SK-N-SH (cell line): ENCODE measurements at regions of chr16 and their contacts with region 1.

Region 1: DNA sequence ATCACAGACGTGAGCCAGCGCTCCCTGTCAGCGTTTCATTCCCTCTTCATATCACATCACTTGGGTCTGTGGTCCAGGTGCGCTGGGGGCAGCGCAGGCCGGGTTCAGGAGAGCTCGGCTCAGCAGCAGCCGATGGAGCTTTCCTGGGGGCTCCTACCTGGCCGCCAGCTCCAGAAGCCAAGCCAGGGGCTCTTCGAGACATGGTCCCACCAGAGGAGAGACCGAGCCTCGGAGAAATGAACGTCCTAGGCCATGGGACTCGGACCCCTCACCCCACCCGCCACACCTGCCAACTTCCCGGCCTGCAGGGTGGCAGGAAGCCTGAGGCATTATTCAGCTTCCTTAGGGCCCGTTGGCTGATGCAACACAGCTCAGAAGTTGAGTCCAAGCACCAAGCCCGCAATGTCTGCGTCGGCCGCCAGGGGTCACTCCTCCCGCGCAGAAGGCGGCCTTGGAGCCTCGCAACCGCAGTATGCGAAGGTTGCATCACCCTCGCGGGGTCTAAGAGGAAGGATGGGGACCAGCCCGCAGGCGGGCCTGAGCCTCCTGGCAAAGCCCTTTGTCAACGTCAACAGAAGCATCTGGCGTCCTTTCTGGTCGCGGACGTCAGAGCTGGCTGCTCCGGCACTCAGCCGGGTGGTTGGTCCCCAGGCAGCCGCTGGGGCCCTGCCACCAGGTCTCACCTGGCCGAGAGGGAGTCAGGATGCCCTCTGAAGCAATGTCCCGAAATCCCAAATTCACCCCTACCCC is 13.2 kb upstream of the KLHDC4 start:
- DNase-seq: peak; percentile 88
- H3K4me3 ChIP-seq: no peak overlapping the region
- H3K27ac ChIP-seq: peak overlapping the region; percentile 64 to 70
- H3K4me1 ChIP-seq: peaks cover 16 to 22% of the 10 kb centered on the region in 2 experiments; a peak in 2 of 4 replicates
- H3K27me3 ChIP-seq: no peaks in the 10 kb centered on the region
- CTCF ChIP-seq: peak; percentile 82
- EP300 ChIP-seq: peak in 1 of 2 experiments; percentile 60; a peak in 1 of 4 replicates
- RAD21 ChIP-seq: peak; percentile 97

Region 2: DNA sequence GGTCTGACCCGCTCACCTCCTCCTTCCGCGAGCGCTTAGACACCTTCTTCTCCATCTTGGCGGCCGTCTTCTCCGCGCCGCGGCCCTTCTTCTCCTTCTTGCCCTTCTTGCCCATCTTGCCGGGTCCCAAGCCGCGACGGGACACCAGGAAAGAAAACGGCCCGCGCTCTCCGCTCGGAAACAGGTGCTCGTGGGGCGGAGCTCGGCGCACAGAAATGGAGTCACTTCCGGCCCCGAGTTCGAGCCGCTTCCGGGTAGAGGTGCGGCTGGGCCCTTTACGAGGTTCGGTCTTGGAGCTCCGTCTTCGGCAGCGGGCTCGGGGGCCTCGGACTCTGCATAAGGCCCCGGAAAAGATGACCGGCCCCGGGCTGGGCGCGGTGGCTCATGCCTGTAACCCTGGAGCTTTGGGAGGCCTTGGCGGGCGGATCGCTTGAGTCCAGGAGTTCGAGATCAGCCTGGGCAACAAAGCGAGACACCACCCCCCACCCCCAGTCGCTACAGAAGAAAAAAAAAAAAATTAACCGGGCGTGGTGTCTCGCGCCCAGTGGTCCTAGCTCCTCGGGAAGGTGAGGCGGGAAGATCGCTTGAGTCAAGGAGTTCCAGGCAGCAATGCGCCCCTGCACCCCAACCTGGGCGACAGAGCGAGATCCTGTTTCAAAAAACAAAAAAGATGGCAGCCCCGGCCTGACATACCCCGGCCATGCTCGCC is 13.1 kb before region 1 on chr16 and contains the start of gene KLHDC4:
- CTCF ChIA-PET with region 1: interaction called, 35 read pairs
- POLR2A ChIA-PET with region 1: no interaction called
- DNase-seq: peak; percentile 94
- H3K4me3 ChIP-seq: peak within 1 kb of the TSS; percentile 79 to 97
- H3K27ac ChIP-seq: peak within 1 kb of the TSS; percentile 66 to 78
- H3K4me1 ChIP-seq: peaks cover 4 to 5% of the 10 kb centered on the region in 2 experiments; a peak in 1 of 4 replicates
- H3K27me3 ChIP-seq: no peaks in the 10 kb centered on the region
- CTCF ChIP-seq: no peak
- EP300 ChIP-seq: no peak
- RAD21 ChIP-seq: no peak
- polyA plus RNA-seq, gene KLHDC4: 39.0 and 51.2 TPM in 2 replicates

Region 3: GRCh38 chr16:87806603-87807546 is 27.9 kb after region 1 on chr16:
- CTCF ChIA-PET with region 1: interaction called, 113 read pairs
- POLR2A ChIA-PET with region 1: interaction called, 11 read pairs
- DNase-seq: peak; percentile 86
- H3K4me3 ChIP-seq: peak overlapping the region; percentile 10 to 21; a peak in 2 of 4 replicates
- H3K27ac ChIP-seq: peak overlapping the region; percentile 49 to 94
- H3K4me1 ChIP-seq: peaks cover 12 to 18% of the 10 kb centered on the region in 2 experiments; a peak in 2 of 4 replicates
- H3K27me3 ChIP-seq: no peaks in the 10 kb centered on the region
- CTCF ChIP-seq: no peak
- EP300 ChIP-seq: peak in 1 of 2 experiments; percentile 60; a peak in 1 of 4 replicates
- RAD21 ChIP-seq: peak; percentile 8; the same call in 1 of the 2 replicates

Region 4: GRCh38 chr16:87834623-87835407 is 55.8 kb after region 1 on chr16:
- CTCF ChIA-PET with region 1: interaction called, 77 read pairs
- POLR2A ChIA-PET with region 1: no interaction called
- DNase-seq: peak; percentile 87
- H3K4me3 ChIP-seq: no peak overlapping the region
- H3K27ac ChIP-seq: peak overlapping the region in 1 of 2 experiments; percentile 71; a peak in 2 of 4 replicates
- H3K4me1 ChIP-seq: peaks cover 7 to 21% of the 10 kb centered on the region in 2 experiments; a peak in 2 of 4 replicates
- H3K27me3 ChIP-seq: no peaks in the 10 kb centered on the region
- CTCF ChIP-seq: no peak
- EP300 ChIP-seq: no peak; a peak in 1 of 4 replicates
- RAD21 ChIP-seq: no peak

Region 5: GRCh38 chr16:87853411-87854052 is 74.5 kb after region 1 on chr16:
- CTCF ChIA-PET with region 1: interaction called, 78 read pairs
- POLR2A ChIA-PET with region 1: interaction called, 3 read pairs
- DNase-seq: peak; percentile 90
- H3K4me3 ChIP-seq: peak overlapping the region; percentile 34 to 48
- H3K27ac ChIP-seq: peak overlapping the region; percentile 85 to 94
- H3K4me1 ChIP-seq: peaks cover 20 to 64% of the 10 kb centered on the region in 2 experiments
- H3K27me3 ChIP-seq: no peaks in the 10 kb centered on the region
- CTCF ChIP-seq: no peak
- EP300 ChIP-seq: peak in 1 of 2 experiments; percentile 59; a peak in 2 of 4 replicates
- RAD21 ChIP-seq: no peak

Region 6: GRCh38 chr16:87877938-87878507 is 99.0 kb after region 1 on chr16:
- CTCF ChIA-PET with region 1: interaction called, 281 read pairs
- POLR2A ChIA-PET with region 1: no interaction called
- DNase-seq: no peak
- H3K4me3 ChIP-seq: no peak overlapping the region
- H3K27ac ChIP-seq: no peak overlapping the region
- H3K4me1 ChIP-seq: no peaks in the 10 kb centered on the region; a peak in 1 of 4 replicates
- H3K27me3 ChIP-seq: no peaks in the 10 kb centered on the region
- CTCF ChIP-seq: peak; percentile 22
- EP300 ChIP-seq: no peak
- RAD21 ChIP-seq: no peak

Region 7: DNA sequence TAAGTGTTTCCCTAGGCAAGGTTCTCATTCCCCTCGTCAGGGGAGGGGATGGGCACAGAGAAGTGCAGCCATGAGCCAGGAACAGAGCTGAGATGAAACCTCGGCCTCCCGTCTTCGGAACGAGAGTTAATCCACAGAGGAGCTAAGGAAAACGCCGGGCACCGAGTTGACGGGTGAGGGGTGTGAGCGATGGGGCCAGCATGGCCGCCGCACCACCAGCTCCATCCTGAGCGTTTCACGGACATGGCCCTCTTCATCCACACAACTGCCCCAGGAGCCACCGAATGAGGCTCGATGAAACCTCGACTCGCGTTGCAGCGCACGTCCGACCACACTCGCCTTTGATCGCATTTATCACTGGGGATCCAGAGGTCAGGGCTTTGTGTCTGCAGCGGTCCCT is 135.8 kb after region 1 on chr16:
- CTCF ChIA-PET with region 1: interaction called, 57 read pairs
- POLR2A ChIA-PET with region 1: no interaction called
- DNase-seq: no peak
- H3K4me3 ChIP-seq: no peak overlapping the region
- H3K27ac ChIP-seq: no peak overlapping the region
- H3K4me1 ChIP-seq: peaks cover 0 to 5% of the 10 kb centered on the region in 2 experiments; a peak in 1 of 4 replicates
- H3K27me3 ChIP-seq: no peaks in the 10 kb centered on the region
- CTCF ChIP-seq: no peak
- EP300 ChIP-seq: no peak
- RAD21 ChIP-seq: no peak